ENCODE measurements at regions of chr17 and their contacts with region 1.

Region 1: GRCh38 chr17:7014261-7014994 is 2.0 kb downstream of the RNASEK start:
- DNase-seq: peak; percentile 94 to 99 (median 98)
- H3K4me3 ChIP-seq: peak overlapping the region; percentile 63 to 100 (median 91)
- H3K27ac ChIP-seq: peak overlapping the region; percentile 86 to 100 (median 99)
- H3K27me3 ChIP-seq: no peaks in the 10 kb centered on the region
- CTCF ChIP-seq: peak; percentile 28 to 94 (median 75)

Region 2: DNA sequence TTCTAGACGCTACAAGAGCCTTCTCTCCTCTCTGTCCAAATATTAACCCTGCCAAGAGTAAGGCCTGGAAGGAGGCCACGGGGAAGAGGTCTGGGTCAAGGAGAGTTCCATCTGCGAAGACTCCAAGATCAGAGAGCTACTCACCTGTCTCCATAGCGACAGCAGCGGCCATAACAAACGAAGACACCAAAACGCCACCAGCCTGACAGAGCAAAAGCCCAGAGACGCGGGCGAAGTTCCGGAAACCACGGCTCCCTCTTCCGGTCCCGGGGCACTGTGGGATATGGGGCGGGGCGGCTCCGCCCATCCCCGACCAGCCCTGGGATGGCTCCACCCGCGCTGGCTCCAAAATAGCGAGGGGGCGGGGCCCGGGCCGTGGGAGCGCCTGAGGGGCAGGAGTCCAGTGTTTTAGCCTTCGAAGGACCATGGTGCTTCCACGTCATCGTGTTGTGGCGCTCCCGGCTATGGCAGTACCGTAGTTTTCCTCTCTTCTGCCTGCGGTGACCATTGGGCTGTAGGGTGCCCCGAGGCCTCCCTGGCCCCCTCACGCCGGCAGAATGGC is 363.0 kb before region 1 on chr17 and contains the starts of genes C17orf100 and MED31:
- intact Hi-C with region 1: loop called in 1 of 2 experiments (anchors 5 kb)
- DNase-seq: peak; percentile 85 to 98 (median 92)
- H3K4me3 ChIP-seq: peak within 1 kb of the TSS; percentile 50 to 100 (median 92)
- H3K27ac ChIP-seq: peak within 1 kb of the TSS in 56 of 59 donors; percentile 5 to 92 (median 74)
- H3K27me3 ChIP-seq: peaks cover 0 to 28% (median 7%) of the 10 kb centered on the region in 45 donors
- CTCF ChIP-seq: peak in 25 of 56 donors; percentile 5 to 58 (median 32)
- total RNA-seq, gene C17orf100: 3.4 to 10.7 (median 6.9) TPM
- total RNA-seq, gene MED31: 12.7 to 38.2 (median 22.1) TPM

Region 3: DNA sequence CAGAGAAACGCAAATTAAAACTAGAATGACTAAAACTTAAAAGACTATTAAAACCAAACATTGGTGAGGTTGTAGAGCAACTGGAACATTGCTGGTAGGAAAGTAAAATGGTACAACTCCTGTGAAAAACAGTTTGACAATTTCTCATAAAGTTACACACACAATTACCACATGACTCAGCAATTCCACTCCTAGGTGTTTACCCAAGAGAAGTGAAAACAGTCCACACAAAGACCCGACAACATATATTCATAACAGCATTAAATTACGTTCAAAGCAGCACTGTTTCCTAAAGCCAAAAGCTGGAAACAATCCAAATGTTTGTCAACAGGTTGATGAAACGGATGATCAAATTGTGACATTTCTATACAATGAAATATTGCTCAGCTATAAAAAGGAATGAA is 45.1 kb before region 1 on chr17:
- intact Hi-C with region 1: no loop called
- DNase-seq: no peak
- H3K4me3 ChIP-seq: no peak overlapping the region
- H3K27ac ChIP-seq: no peak overlapping the region
- H3K27me3 ChIP-seq: no peaks in the 10 kb centered on the region
- CTCF ChIP-seq: no peak

Region 4: DNA sequence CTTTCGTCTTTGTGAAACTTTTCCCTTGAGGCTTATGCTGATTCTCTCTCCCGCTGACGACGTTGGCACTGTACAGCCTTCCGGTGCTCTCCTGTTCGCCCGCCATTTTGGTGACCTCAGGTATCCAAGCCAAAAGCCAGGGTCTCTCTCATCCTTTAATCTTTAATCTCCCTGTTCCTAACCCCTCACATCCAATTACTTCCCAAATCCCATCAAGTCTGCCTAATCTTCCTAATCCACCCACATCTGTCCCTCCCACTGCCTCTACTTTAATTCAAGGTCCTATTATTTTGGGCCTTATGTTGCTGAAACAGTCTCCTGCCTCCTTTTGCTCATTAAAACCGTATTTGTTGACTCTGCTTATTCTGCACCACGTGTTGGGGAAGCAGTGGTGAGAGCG is 681.2 kb after region 1 on chr17:
- intact Hi-C with region 1: no loop called
- DNase-seq: no peak
- H3K4me3 ChIP-seq: no peak overlapping the region
- H3K27ac ChIP-seq: no peak overlapping the region
- H3K27me3 ChIP-seq: no peaks in the 10 kb centered on the region
- CTCF ChIP-seq: no peak

Measured in dorsolateral prefrontal cortex (tissue), 120 donors.